Body of pancreas (tissue), 4 donors: ENCODE measurements at regions of chr20 and their contacts with region 1.

Region 1: DNA sequence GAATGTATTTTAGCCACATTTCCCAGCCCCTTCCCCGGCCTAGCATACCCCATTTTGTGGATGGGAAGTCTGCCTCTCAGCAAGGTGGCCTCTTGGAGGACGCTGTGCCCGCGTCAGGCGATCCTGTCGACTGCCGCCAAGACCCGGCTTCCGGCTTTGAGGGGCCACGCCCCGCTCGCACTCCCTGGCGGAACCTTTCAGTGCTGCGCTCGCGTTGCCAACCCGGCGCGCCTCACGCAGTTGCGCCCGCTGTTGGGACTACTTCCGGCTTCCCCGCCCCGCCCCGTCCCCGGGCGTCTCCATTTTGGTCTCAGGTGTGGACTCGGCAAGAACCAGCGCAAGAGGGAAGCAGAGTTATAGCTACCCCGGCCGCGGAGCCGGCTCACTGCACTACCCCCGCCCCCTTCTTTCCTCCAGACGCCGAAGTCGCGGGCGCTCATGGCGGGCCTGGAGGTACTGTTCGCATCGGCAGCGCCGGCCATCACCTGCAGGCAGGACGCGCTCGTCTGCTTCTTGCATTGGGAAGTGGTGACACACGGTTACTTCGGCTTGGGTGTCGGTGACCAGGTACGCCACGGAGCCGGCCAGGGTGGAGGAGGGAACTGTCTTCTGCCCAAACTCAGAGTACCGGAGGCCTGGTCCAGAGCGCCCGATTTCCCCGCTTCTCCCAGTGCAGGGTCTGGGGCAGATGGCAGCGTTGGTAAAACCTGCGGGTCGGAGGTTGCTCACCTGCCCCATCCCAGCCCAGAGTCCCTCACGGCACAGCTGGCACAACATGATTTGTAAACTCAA is at the start of gene PSMF1:
- DNase-seq: peak; percentile 95 to 98 (median 96)
- ATAC-seq: peak; percentile 98
- H3K4me3 ChIP-seq: peak within 1 kb of the TSS; percentile 95 to 100
- H3K27ac ChIP-seq: peak within 1 kb of the TSS; percentile 58 to 90 (median 80)
- H3K4me1 ChIP-seq: peaks cover 49% of the 10 kb centered on the region
- H3K27me3 ChIP-seq: no peaks in the 10 kb centered on the region
- CTCF ChIP-seq: peak in 4 of 7 experiments; percentile 13 to 56 (median 36)
- POLR2A ChIP-seq: peak; percentile 49 to 85 (median 74)
- total RNA-seq, gene PSMF1: 32.9 to 53.1 TPM

Region 2: GRCh38 chr20:1225783-1226654 is 107.5 kb after region 1 on chr20 and contains the start of gene RAD21L1:
- intact Hi-C with region 1: no loop called
- DNase-seq: peak; percentile 75 to 86 (median 82)
- ATAC-seq: peak; percentile 89
- H3K4me3 ChIP-seq: peak within 1 kb of the TSS; percentile 26 to 36
- H3K27ac ChIP-seq: no peak within 1 kb of the TSS
- H3K4me1 ChIP-seq: peaks cover 12% of the 10 kb centered on the region
- H3K27me3 ChIP-seq: peaks cover 0 to 5% of the 10 kb centered on the region in 2 donors
- CTCF ChIP-seq: no peak
- POLR2A ChIP-seq: no peak
- total RNA-seq, gene RAD21L1: not detected

Region 3: GRCh38 chr20:1466211-1467081 is 347.9 kb after region 1 on chr20 and contains the start of gene NSFL1C:
- intact Hi-C with region 1: loop called (anchors 10 kb)
- DNase-seq: peak; percentile 97
- ATAC-seq: peak; percentile 87
- H3K4me3 ChIP-seq: peak within 1 kb of the TSS; percentile 87 to 99
- H3K27ac ChIP-seq: peak within 1 kb of the TSS; percentile 56 to 95 (median 88)
- H3K4me1 ChIP-seq: peaks cover 61% of the 10 kb centered on the region
- H3K27me3 ChIP-seq: no peaks in the 10 kb centered on the region
- CTCF ChIP-seq: peak; percentile 82 to 99 (median 98)
- POLR2A ChIP-seq: peak; percentile 57 to 72 (median 69)
- total RNA-seq, gene NSFL1C: 23.1 to 33.7 TPM

Region 4: DNA sequence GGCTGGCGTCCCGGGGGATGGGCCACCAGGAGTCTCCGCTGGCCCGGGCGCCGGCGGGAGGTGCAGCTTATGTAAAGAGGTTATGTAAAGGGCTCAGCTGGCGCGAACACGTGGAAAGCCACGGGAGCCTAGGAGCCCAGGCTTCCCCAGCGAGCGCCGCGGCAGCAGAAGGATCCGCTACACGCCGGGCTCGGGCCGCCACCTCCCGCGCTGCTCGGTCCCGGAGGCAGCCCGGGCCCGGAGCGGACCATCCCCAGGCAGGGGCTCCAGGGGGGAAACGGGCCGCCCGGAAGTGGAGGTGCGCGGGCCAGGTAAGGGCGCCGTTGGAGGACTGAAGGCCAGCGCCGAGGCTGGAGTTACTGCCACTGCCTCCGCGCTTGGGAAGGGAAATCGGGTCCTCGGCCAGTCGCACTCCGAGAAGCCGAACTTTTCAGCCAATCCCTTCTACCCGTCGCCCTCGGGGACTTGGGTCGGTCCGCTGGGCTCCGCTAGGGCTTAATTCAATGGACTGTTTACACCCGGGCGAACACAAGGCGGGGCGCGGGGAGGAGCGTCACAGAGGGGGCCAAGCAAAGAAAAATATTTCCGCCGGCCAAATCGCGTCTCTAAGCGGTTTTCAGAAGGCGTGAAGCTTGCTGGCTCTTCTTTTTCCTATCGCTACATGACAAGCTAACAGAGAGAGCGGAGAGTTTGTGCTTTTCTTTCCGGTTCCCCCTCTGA is 983.5 kb after region 1 on chr20:
- intact Hi-C with region 1: loop called (anchors 10 kb)
- DNase-seq: peak; percentile 88 to 94 (median 92)
- ATAC-seq: peak; percentile 89
- H3K4me3 ChIP-seq: peak overlapping the region; percentile 79 to 82
- H3K27ac ChIP-seq: peak overlapping the region; percentile 98 to 100 (median 100)
- H3K4me1 ChIP-seq: peaks cover 42% of the 10 kb centered on the region
- H3K27me3 ChIP-seq: no peaks in the 10 kb centered on the region
- CTCF ChIP-seq: peak in 2 of 7 experiments; percentile 0 to 8
- POLR2A ChIP-seq: peak; percentile 30 to 67 (median 57)